Endothelial cell of umbilical vein (primary cell): ENCODE measurements at regions of chr10 and their contacts with region 1.

Region 1: DNA sequence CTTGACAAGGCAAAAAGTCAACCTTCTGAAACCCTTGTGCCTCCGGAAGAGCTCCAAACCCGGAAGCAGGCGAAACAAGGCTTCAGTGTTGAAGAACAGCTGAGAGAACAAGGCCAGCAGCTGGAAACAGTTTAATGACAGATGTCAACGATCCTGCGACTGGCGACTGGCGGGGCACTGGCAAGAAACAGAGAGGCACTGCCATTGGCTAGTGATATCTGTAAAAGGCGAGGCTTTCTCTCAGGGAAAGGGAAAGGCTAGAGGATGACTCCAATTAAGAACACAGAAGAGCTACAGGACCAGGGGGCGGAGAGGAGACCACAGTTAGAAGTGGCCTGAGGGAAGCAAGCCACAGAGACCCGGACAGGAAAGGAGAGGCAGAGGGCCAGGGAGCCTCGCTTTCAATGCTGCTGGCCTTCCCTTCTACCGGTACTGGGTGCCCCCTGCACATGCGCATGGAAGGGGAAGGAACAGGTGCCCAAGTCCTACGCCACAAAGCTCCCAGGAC is 19.4 kb downstream of the ITGB1 start:
- DNase-seq: no peak
- H3K4me3 ChIP-seq: peak overlapping the region in 1 of 3 experiments; percentile 3
- H3K27ac ChIP-seq: peak overlapping the region; percentile 53
- H3K4me1 ChIP-seq: peaks cover 49% of the 10 kb centered on the region
- H3K27me3 ChIP-seq: no peaks in the 10 kb centered on the region
- CTCF ChIP-seq: no peak
- POLR2A ChIP-seq: no peak

Region 2: GRCh38 chr10:32950591-32951108 is 12.0 kb after region 1 on chr10:
- CTCF ChIA-PET with region 1: interaction called, 8 read pairs
- POLR2A ChIA-PET with region 1: no interaction called
- dilution Hi-C with region 1: no loop called
- intact Hi-C with region 1: loop called (anchors 1 kb)
- DNase-seq: peak; percentile 35
- H3K4me3 ChIP-seq: peak overlapping the region in 1 of 3 experiments; percentile 42
- H3K27ac ChIP-seq: peak overlapping the region; percentile 49
- H3K4me1 ChIP-seq: peaks cover 60% of the 10 kb centered on the region
- H3K27me3 ChIP-seq: no peaks in the 10 kb centered on the region
- CTCF ChIP-seq: no peak
- POLR2A ChIP-seq: no peak

Region 3: GRCh38 chr10:32980558-32981468 is 42.2 kb after region 1 on chr10:
- CTCF ChIA-PET with region 1: interaction called, 4 read pairs
- POLR2A ChIA-PET with region 1: interaction called, 6 read pairs
- dilution Hi-C with region 1: no loop called
- intact Hi-C with region 1: loop called (anchors 2 kb)
- DNase-seq: peak; percentile 98
- H3K4me3 ChIP-seq: peak overlapping the region in 2 of 3 experiments; percentile 11 to 37
- H3K27ac ChIP-seq: peak overlapping the region; percentile 90
- H3K4me1 ChIP-seq: peaks cover 57% of the 10 kb centered on the region
- H3K27me3 ChIP-seq: no peaks in the 10 kb centered on the region
- CTCF ChIP-seq: no peak
- POLR2A ChIP-seq: peak; percentile 87

Region 4: GRCh38 chr10:33041779-33042437 is 103.3 kb after region 1 on chr10:
- CTCF ChIA-PET with region 1: no interaction called
- POLR2A ChIA-PET with region 1: no interaction called
- dilution Hi-C with region 1: no loop called
- intact Hi-C with region 1: no loop called
- DNase-seq: no peak
- H3K4me3 ChIP-seq: no peak overlapping the region
- H3K27ac ChIP-seq: no peak overlapping the region
- H3K4me1 ChIP-seq: no peaks in the 10 kb centered on the region
- H3K27me3 ChIP-seq: no peaks in the 10 kb centered on the region
- CTCF ChIP-seq: no peak
- POLR2A ChIP-seq: no peak